ENCODE measurements at regions of chr3 and their contacts with region 1.

Region 1: DNA sequence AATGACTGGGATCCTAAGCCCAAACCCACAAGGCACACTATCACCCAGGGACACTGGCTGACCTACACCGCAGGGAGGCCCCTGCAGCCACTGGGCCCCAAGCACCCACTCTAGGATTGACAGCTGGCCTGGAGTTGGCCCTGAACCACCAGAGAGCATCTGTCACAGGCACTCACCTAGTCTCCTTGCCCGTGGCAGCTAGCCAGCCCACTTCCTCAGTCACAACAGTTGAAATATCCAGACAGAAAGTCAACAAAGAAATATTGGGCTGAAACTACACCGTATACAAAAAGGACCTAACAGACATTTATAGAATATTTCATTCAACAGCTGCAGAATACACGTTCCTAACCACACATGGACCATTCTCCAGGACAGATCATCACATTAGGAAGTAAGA is 5.2 kb upstream of the SPINK8 start:
- DNase-seq: no peak
- ATAC-seq: no peak
- H3K4me3 ChIP-seq: no peak overlapping the region
- H3K27ac ChIP-seq: no peak overlapping the region
- H3K4me1 ChIP-seq: 0 out of 2 replicates have a peak, but pooled peaks cover under 1% of the 10 kb centered on the region
- H3K27me3 ChIP-seq: no peaks in the 10 kb centered on the region
- CTCF ChIP-seq: no peak
- EP300 ChIP-seq: no peak
- POLR2A ChIP-seq: no peak
- RAD21 ChIP-seq: no peak

Region 2: DNA sequence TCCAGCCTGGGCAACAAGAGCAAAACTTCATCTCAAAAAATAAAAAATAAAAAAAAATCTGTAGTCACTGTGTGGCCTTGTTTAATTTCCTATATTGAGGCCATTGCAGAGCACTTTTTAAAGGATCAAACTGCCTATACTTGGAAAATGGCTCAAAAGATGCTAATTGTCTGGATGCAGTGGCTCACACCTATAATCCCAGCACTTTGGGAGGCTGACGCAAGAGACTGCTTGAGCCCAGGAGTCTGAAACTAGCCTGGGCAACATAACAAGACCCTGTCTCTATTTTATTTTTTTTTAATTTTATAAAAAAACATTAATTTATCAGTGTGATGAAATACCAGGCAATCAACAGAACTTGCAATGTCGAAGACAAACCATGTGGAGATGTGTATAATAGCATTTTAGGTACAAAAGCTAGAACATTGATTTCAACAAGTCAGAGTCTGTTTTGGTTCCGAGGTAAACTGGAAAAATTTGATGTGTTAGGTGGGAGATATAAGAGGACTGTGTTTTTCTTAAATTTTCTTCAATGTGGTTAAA is 1127.7 kb before region 1 on chr3:
- CTCF ChIA-PET with region 1: no interaction called
- POLR2A ChIA-PET with region 1: interaction called, 10 read pairs
- RAD21 ChIA-PET with region 1: no interaction called
- SMC1A ChIA-PET with region 1: no interaction called
- in situ Hi-C with region 1: no loop called
- intact Hi-C with region 1: no loop called
- DNase-seq: no peak
- ATAC-seq: no peak
- H3K4me3 ChIP-seq: no peak overlapping the region
- H3K27ac ChIP-seq: no peak overlapping the region
- H3K4me1 ChIP-seq: no peaks in the 10 kb centered on the region
- H3K27me3 ChIP-seq: no peaks in the 10 kb centered on the region
- CTCF ChIP-seq: no peak
- EP300 ChIP-seq: no peak
- POLR2A ChIP-seq: no peak
- RAD21 ChIP-seq: no peak

Region 3: DNA sequence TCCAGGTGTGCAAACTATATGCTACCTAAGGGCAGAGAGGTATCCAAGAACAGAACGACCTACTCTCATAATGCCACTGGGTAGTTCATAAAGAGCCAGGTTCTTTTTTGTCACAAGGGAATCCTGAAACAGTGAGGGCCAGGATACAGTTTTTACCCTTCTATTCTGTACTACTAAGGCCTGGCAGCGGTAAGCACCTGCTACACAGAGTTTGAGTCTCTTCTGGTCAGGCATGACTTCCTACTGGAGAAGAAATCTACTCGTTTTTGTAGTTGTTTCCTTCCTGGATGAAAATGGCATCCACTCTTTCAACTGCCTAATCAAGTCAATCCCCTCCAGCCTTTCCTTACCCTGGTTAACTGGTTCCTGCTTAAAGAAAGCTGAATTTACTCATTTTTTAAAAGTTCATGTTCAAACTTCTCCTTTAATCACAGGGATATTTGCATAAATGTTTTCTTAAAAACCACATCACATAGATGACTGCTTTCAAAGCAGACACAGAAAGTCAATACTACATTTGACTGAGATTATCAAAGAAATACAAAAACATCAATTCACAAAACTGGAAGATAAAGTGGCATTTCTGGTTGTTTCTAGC is 362.4 kb before region 1 on chr3:
- CTCF ChIA-PET with region 1: no interaction called
- POLR2A ChIA-PET with region 1: no interaction called
- RAD21 ChIA-PET with region 1: no interaction called
- SMC1A ChIA-PET with region 1: no interaction called
- in situ Hi-C with region 1: no loop called
- intact Hi-C with region 1: no loop called
- DNase-seq: no peak
- ATAC-seq: peak; percentile 78
- H3K4me3 ChIP-seq: no peak overlapping the region; the same call in 1 of the 2 replicates
- H3K27ac ChIP-seq: peak overlapping the region; percentile 63
- H3K4me1 ChIP-seq: peaks cover 17% of the 10 kb centered on the region
- H3K27me3 ChIP-seq: no peaks in the 10 kb centered on the region
- CTCF ChIP-seq: no peak
- EP300 ChIP-seq: no peak
- POLR2A ChIP-seq: no peak
- RAD21 ChIP-seq: no peak